Lower leg skin (tissue), 4 donors: ENCODE measurements at regions of chr3 and their contacts with region 1.

Region 1: GRCh38 chr3:76700323-76700722 is 339.6 kb upstream of the ROBO2 start:
- DNase-seq: no peak
- H3K4me3 ChIP-seq: no peak overlapping the region
- CTCF ChIP-seq: no peak
- POLR2A ChIP-seq: no peak

Region 2: GRCh38 chr3:77489216-77489615 is 788.9 kb after region 1 on chr3:
- intact Hi-C with region 1: loop called (anchors 10 kb)
- DNase-seq: no peak
- H3K4me3 ChIP-seq: no peak overlapping the region
- CTCF ChIP-seq: no peak
- POLR2A ChIP-seq: no peak